ENCODE measurements at regions of chr10 and their contacts with region 1.

Region 1: GRCh38 chr10:32378363-32379317 is 31.7 kb upstream of the EPC1 start:
- DNase-seq: peak; percentile 95 to 97
- ATAC-seq: peak; percentile 89

Region 2: GRCh38 chr10:32445740-32446535 is 67.3 kb after region 1 on chr10 and contains the start of gene CCDC7:
- intact Hi-C with region 1: loop called in 1 of 2 experiments (anchors 10 kb)
- DNase-seq: peak; percentile 73 to 89
- ATAC-seq: peak; percentile 96
- total RNA-seq, gene CCDC7: 11.4 to 15.9 TPM

Measured in left colon (tissue), 2 donors.